ENCODE measurements at regions of chr21 and their contacts with region 1.

Region 1: GRCh38 chr21:42524349-42525151 is 10.9 kb downstream of the SLC37A1 start:
- DNase-seq: peak; percentile 63
- H3K4me3 Mint-ChIP-seq: no peak overlapping the region
- H3K27ac Mint-ChIP-seq: no peak overlapping the region
- H3K4me1 Mint-ChIP-seq: peaks cover 56% of the 10 kb centered on the region
- H3K27me3 Mint-ChIP-seq: no peaks in the 10 kb centered on the region

Region 2: DNA sequence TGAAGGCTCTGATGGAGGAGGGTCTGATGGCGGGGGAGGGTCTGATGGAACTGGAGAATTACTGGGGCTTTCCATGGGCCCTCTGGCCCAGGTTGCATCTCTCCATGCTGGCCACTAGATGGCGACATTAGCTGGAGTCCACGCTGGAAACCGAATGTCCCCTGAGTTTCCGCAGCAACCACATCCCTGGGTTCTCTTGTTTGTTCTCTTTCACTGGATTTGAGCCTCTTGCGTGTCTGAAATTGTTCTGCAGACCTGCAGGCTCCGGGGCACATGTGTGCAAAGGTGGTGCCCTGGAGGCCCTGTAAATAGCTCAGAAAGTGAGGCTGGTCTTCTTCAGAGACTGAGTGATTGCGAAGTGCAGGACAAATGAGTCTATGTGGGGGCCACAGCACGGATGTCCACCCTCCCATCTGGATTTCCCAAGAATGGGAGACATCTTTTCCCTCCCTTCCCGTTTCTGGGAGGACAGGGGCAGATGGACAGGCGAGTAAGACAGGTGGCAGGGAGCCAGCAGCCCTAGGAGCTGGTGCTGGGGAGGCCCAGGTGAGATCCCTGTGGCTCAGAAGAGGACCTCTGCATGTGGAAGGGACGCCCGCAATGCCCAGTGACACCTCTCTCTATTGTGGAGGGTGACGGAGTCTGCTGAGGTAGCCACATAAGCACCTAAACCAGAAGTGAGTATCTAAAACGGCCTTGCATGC is 378.8 kb before region 1 on chr21:
- CTCF ChIA-PET with region 1: no interaction called
- intact Hi-C with region 1: loop called (anchors 10 kb)
- DNase-seq: peak; percentile 77
- H3K4me3 Mint-ChIP-seq: no peak overlapping the region
- H3K27ac Mint-ChIP-seq: no peak overlapping the region
- H3K4me1 Mint-ChIP-seq: peaks cover 7% of the 10 kb centered on the region
- H3K27me3 Mint-ChIP-seq: no peaks in the 10 kb centered on the region

Region 3: DNA sequence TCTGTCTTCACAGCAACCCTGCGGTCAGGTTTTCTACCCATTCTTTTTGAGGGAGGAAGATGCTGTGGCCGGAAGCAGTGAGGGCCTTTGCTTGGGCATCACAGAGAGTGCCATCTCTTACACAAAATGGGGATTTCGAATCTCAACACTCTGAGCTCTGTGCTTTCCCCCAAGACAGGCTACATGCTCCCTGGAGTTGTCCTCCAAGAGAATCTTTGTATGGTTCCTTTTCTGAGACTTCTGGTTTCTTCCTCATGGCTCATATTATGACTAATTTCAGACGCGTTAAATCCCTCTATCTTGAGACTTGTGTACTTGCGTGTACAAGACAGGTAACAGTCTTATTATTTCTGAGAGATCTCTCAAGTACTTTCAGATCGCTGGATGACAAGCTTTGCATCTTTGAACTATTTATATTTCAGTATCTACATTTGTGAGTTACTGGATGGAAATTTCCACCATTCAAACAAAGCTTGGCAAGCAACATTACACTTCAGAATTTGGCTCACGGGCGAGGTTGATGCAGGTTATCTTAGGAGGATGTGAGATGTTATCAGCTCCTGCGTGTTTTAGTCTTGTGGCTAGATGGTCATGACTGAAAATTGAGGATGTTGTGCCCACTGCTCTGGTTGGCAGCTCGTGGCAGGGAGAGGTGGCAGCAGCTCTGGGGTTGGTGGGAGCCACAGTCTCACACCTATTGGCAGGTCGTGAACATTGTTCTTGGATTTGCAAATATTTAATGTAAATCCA is 286.2 kb before region 1 on chr21:
- CTCF ChIA-PET with region 1: no interaction called
- intact Hi-C with region 1: loop called (anchors 2 kb)
- DNase-seq: peak; percentile 66
- H3K4me3 Mint-ChIP-seq: peak overlapping the region; percentile 13
- H3K27ac Mint-ChIP-seq: peak overlapping the region; percentile 95
- H3K4me1 Mint-ChIP-seq: peaks cover 53% of the 10 kb centered on the region
- H3K27me3 Mint-ChIP-seq: no peaks in the 10 kb centered on the region

Region 4: GRCh38 chr21:42381334-42381984 is 143.1 kb before region 1 on chr21:
- CTCF ChIA-PET with region 1: no interaction called
- intact Hi-C with region 1: no loop called
- DNase-seq: peak; percentile 81
- H3K4me3 Mint-ChIP-seq: no peak overlapping the region
- H3K27ac Mint-ChIP-seq: no peak overlapping the region
- H3K4me1 Mint-ChIP-seq: peaks cover 5% of the 10 kb centered on the region
- H3K27me3 Mint-ChIP-seq: no peaks in the 10 kb centered on the region

Region 5: GRCh38 chr21:42440187-42440792 is 84.3 kb before region 1 on chr21:
- CTCF ChIA-PET with region 1: no interaction called
- intact Hi-C with region 1: no loop called
- DNase-seq: no peak
- H3K4me3 Mint-ChIP-seq: no peak overlapping the region
- H3K27ac Mint-ChIP-seq: peak overlapping the region; percentile 46
- H3K4me1 Mint-ChIP-seq: peaks cover 31% of the 10 kb centered on the region
- H3K27me3 Mint-ChIP-seq: no peaks in the 10 kb centered on the region

Region 6: GRCh38 chr21:42456457-42456856 is 68.1 kb before region 1 on chr21:
- CTCF ChIA-PET with region 1: no interaction called
- intact Hi-C with region 1: loop called (anchors 2 kb)
- DNase-seq: peak; percentile 83
- H3K4me3 Mint-ChIP-seq: no peak overlapping the region
- H3K27ac Mint-ChIP-seq: peak overlapping the region; percentile 57
- H3K4me1 Mint-ChIP-seq: peaks cover 42% of the 10 kb centered on the region
- H3K27me3 Mint-ChIP-seq: no peaks in the 10 kb centered on the region

Region 7: GRCh38 chr21:42474043-42474831 is 50.3 kb before region 1 on chr21:
- CTCF ChIA-PET with region 1: no interaction called
- intact Hi-C with region 1: no loop called
- DNase-seq: no peak
- H3K4me3 Mint-ChIP-seq: no peak overlapping the region
- H3K27ac Mint-ChIP-seq: no peak overlapping the region
- H3K4me1 Mint-ChIP-seq: no peaks in the 10 kb centered on the region
- H3K27me3 Mint-ChIP-seq: no peaks in the 10 kb centered on the region

Region 8: GRCh38 chr21:42513985-42514882 is 10.3 kb before region 1 on chr21:
- CTCF ChIA-PET with region 1: interaction called, 3 read pairs
- intact Hi-C with region 1: loop called (anchors 1 kb)
- DNase-seq: peak; percentile 72
- H3K4me3 Mint-ChIP-seq: peak overlapping the region; percentile 87
- H3K27ac Mint-ChIP-seq: peak overlapping the region; percentile 84
- H3K4me1 Mint-ChIP-seq: peaks cover 31% of the 10 kb centered on the region
- H3K27me3 Mint-ChIP-seq: no peaks in the 10 kb centered on the region

Region 9: GRCh38 chr21:43775795-43776430 is 1251.4 kb after region 1 on chr21 and contains the start of gene CSTB:
- CTCF ChIA-PET with region 1: no interaction called
- intact Hi-C with region 1: loop called (anchors 10 kb)
- DNase-seq: peak; percentile 85
- H3K4me3 Mint-ChIP-seq: peak within 1 kb of the TSS; percentile 80
- H3K27ac Mint-ChIP-seq: peak within 1 kb of the TSS; percentile 51
- H3K4me1 Mint-ChIP-seq: peaks cover 38% of the 10 kb centered on the region
- H3K27me3 Mint-ChIP-seq: no peaks in the 10 kb centered on the region
- total RNA-seq, gene CSTB: 22.8 to 23.0 TPM